GM10248 (cell line): ENCODE measurements at regions of chr7 and their contacts with region 1.

Region 1: GRCh38 chr7:116953727-116954442 is 584 bp downstream of the ST7 start:
- DNase-seq: peak; percentile 77
- CTCF ChIP-seq: no peak

Region 2: DNA sequence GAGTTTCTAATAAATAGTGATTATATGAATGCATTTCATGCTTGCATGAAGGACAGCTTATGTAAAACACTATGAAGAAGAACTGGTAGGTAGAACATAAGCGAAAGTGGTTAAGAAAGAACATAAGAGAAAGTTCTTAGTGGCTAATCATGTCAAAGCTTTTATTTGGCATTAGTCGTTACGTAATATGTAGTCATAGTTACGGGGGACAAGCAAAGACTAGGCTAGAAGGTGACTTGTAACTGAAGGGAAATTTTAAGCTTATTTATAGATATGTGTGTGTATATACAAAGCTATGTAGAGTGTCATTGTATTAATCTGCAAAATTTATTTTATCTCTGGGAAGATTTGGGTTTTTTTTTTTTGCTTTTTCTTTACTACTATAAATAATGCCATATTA is 54.6 kb before region 1 on chr7:
- CTCF ChIA-PET with region 1: no interaction called
- POLR2A ChIA-PET with region 1: no interaction called
- DNase-seq: no peak
- CTCF ChIP-seq: no peak

Region 3: DNA sequence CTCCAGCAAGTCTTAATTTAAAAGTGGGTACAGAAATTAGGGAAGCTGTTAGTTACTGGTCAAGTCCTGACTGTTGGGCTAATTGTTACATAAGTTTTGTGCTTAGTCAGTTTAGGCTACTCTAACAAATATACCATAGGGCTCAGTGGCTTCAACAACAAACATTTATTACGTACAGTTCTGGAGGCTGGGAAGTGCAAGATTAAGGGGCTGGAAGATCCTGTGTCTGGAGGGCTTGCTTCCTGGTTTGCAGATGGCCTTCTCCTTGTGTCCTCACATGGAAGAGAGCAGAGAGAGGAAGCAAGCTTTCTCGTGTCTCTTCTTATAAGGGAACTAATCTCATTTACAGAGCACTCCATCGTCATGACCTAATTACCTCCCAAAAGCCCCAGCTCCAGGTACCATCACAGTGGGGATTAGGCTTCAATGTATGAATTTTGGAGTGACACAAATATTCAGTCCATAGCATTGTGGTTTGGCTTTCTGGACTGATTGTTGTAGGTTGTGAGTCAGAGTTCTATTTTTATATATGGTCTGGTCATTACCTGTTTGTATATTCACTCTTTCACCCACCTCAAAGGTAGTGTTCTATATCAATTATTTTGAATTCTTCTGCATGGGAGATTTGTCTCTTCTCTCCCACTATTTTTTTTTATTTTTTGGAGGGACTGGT is 16.5 kb after region 1 on chr7:
- CTCF ChIA-PET with region 1: interaction called, 14 read pairs
- POLR2A ChIA-PET with region 1: no interaction called
- DNase-seq: no peak
- CTCF ChIP-seq: no peak

Region 4: DNA sequence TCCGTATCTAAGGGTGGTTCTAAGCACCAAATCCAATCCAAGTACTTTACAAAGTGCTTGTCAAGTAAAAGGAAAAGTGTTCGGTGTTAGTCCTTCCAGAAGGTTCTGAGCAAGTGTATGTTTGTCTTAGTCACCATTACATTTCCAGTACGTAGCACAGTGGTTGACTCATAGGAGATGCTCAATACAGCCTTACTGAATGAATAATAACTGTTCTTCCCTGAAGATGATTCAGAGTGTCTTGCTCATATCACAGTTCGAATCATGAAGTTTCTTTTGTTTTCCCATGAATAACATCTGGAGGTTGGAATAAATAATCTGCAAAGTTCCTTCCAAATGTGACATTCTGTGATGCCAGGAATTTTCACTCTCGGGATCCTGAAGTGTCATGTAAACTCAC is 315.5 kb after region 1 on chr7:
- CTCF ChIA-PET with region 1: no interaction called
- POLR2A ChIA-PET with region 1: no interaction called
- DNase-seq: no peak
- CTCF ChIP-seq: no peak